Vagina (tissue), 2 donors: ENCODE measurements at regions of chr12 and their contacts with region 1.

Region 1: DNA sequence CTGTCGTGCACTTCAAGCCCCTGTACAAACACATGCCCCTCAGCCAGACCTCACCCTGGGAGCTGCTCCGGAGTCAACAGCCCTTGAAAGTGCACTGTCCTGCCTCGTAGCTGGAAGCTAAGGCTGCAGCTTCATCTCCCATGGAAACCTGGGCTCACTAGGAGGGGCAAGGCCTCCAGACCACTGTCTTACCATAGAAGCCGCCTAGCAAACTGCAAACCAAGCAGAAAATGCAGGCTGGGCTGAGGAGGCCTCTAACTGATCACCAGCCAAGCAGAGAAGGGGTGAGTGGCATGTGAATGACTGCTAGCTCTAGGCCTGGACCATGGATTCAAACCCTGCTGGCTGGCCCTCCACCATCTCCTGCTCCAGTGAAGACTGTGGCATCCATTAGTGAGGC is 340.2 kb downstream of the CACNA1C start:
- DNase-seq: no peak
- H3K4me3 ChIP-seq: no peak overlapping the region
- H3K27ac ChIP-seq: no peak overlapping the region
- H3K4me1 ChIP-seq: peaks cover 28% of the 10 kb centered on the region
- H3K27me3 ChIP-seq: no peaks in the 10 kb centered on the region
- CTCF ChIP-seq: no peak
- POLR2A ChIP-seq: no peak

Region 2: DNA sequence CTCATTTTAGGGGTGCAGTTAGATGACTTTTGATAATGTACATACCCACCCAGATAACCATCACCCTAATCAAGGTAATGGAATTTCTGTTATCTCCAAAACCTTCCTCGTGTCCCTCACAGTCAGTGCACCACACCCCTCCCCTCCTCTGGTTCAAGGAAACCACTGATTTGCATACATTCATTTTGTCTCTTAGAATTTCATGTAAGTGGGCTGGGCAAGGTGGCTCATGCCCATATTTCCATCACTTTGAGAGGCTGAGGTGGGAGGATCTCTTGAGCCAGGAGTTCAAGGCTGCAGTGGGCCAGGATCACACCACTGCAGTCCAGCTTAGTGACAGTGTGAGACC is 686.4 kb before region 1 on chr12:
- intact Hi-C with region 1: loop called (anchors 5 kb)
- DNase-seq: no peak
- H3K4me3 ChIP-seq: no peak overlapping the region
- H3K27ac ChIP-seq: no peak overlapping the region
- H3K4me1 ChIP-seq: peaks cover 18% of the 10 kb centered on the region
- H3K27me3 ChIP-seq: no peaks in the 10 kb centered on the region
- CTCF ChIP-seq: no peak
- POLR2A ChIP-seq: no peak